KBM-7 (cell line): ENCODE measurements at regions of chr2 and their contacts with region 1.

Region 1: DNA sequence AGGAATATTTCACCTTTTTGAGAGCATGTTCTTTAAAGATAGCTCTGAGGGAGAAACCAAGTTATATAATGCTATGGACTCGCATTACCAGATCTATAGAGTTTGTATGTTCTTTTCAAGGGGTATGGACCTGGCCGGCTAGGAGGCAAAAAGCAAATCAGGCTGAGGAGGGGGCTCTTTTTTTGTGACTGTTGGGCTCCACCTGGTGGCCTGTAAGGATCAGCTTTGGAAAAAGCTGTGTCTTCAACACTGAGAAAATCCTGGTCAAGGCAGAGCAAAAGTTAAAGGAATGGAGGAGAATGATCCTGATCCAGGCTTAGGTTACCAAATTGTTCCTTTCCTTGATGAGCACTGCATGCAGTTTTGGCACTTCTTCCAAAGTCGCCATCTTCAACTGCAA is 180.5 kb downstream of the DIS3L2 start:
- DNase-seq: peak; percentile 55

Region 2: DNA sequence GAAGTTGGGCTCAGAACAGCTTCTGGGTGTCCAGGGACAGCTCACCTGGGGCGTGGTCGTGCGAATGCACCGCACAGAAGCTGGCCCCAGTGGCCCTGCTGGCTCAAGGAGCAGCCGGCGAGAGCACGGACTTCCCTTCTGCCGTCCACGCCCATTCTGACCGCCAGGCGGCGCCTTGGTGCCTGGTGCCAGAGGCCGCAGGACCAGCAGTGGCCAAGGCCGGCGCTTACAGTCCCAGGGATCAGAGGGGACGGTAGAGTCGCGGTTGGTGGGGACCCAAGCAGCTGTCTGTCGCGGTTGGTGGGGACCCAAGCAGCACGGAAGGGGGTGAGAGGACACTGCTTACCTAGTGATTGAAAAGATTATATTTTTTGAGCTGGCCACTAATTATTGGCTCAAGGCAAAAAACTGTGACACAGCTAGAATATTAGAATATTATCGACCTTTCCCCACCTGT is 241.5 kb before region 1 on chr2:
- in situ Hi-C with region 1: loop called (anchors 25 kb)
- DNase-seq: peak; percentile 69

Region 3: DNA sequence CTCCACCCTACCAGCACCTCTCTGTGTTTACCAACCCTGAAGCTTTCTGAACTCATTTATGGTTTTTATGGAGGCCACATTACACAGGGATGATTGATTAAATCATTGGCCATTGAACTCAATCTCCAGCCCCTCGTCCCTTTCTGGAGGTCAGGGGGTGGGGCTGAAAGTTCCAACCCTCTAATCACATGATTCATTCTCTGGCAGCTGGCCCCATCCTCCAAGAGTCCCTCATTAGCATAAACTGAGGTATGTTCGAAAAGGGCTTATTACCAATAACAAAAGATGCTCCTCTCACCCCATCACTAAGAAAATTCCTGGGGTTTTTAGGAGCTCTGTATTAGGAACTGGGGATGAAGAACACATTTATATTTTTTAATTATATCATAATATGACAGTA is 88.3 kb before region 1 on chr2:
- in situ Hi-C with region 1: no loop called
- DNase-seq: no peak